Endothelial cell of umbilical vein (primary cell): ENCODE measurements at regions of chr10 and their contacts with region 1.

Region 1: GRCh38 chr10:35027567-35027966 is 62.6 kb downstream of the CUL2 start:
- DNase-seq: peak; percentile 63
- H3K4me3 ChIP-seq: no peak overlapping the region
- H3K27ac ChIP-seq: no peak overlapping the region
- H3K4me1 ChIP-seq: no peaks in the 10 kb centered on the region
- H3K27me3 ChIP-seq: no peaks in the 10 kb centered on the region
- CTCF ChIP-seq: peak in 1 of 2 donors; percentile 6
- POLR2A ChIP-seq: no peak

Region 2: DNA sequence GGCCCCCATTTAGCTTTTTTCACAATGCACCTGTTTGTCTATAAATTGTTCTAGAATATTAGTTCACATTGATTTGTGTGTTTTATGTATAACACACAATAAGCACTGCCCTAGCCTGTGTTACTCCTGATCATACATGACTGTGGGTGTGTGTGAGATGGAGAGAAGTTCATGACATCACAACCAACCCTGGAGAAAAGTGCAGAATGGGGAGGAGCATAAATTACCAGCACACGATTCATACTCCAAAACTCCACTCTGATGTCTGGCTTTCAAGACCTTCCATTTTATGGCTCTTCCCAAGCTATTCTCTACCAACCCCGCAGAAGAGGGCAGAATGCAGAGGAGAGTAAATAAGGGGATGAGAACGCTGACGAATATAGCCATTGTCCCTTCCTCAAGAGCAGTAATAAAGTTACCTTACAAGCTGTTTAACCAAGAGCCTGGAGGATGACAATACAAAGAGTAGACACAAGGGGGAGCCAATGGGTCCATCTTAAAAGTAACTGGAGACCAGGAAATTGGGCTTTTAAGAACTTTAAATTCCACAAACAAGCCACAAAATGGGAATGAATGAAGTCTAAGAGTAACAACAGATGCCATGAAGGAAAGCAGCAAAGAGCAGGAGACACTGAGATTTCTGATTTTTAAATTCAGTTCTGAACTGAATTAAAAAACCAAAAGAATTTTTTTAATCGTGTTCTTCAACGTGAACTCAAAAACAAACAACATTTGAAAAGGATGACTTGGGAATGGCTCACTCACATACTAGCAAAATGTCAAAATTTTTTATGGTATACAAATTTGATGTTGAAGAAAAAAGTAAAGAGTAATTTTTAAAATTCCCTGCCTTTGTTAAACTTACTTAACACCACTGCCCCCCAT is 372.0 kb before region 1 on chr10:
- CTCF ChIA-PET with region 1: interaction called, 16 read pairs
- POLR2A ChIA-PET with region 1: no interaction called
- dilution Hi-C with region 1: no loop called
- intact Hi-C with region 1: no loop called
- DNase-seq: peak; percentile 86
- H3K4me3 ChIP-seq: no peak overlapping the region
- H3K27ac ChIP-seq: no peak overlapping the region
- H3K4me1 ChIP-seq: no peaks in the 10 kb centered on the region
- H3K27me3 ChIP-seq: no peaks in the 10 kb centered on the region
- CTCF ChIP-seq: peak; percentile 53 to 64
- POLR2A ChIP-seq: no peak

Region 3: DNA sequence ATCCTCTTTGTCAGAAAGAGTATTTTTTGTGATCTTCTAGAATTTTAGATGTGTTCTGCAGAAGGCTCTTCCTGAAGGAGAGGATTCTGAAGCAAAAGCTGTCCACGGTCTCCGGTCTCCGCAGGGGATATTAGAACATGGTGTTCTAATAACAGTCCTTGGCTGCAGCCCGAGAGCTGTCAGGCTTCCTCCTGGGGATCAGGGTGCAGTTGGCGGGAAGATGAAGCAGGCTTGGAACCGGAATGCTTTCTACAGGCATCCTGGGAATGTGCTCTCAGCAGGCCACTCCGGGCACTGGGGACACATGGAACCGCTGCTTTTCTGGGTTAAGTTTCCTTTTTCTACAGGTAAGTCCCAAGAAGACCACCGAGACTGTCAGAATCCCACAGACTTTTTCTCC is 93.9 kb before region 1 on chr10:
- CTCF ChIA-PET with region 1: interaction called, 3 read pairs
- POLR2A ChIA-PET with region 1: interaction called, 16 read pairs
- dilution Hi-C with region 1: no loop called
- intact Hi-C with region 1: no loop called
- DNase-seq: no peak
- H3K4me3 ChIP-seq: no peak overlapping the region
- H3K27ac ChIP-seq: no peak overlapping the region
- H3K4me1 ChIP-seq: peaks cover 4% of the 10 kb centered on the region
- H3K27me3 ChIP-seq: no peaks in the 10 kb centered on the region
- CTCF ChIP-seq: no peak
- POLR2A ChIP-seq: no peak

Region 4: GRCh38 chr10:35040760-35041501 is 13.4 kb after region 1 on chr10:
- CTCF ChIA-PET with region 1: interaction called, 11 read pairs
- POLR2A ChIA-PET with region 1: no interaction called
- dilution Hi-C with region 1: no loop called
- intact Hi-C with region 1: no loop called
- DNase-seq: peak; percentile 74
- H3K4me3 ChIP-seq: no peak overlapping the region
- H3K27ac ChIP-seq: no peak overlapping the region
- H3K4me1 ChIP-seq: peaks cover 16% of the 10 kb centered on the region
- H3K27me3 ChIP-seq: no peaks in the 10 kb centered on the region
- CTCF ChIP-seq: no peak
- POLR2A ChIP-seq: no peak

Region 5: GRCh38 chr10:35058134-35058533 is 30.6 kb after region 1 on chr10:
- CTCF ChIA-PET with region 1: interaction called, 13 read pairs
- POLR2A ChIA-PET with region 1: no interaction called
- dilution Hi-C with region 1: no loop called
- intact Hi-C with region 1: no loop called
- DNase-seq: peak; percentile 85
- H3K4me3 ChIP-seq: peak overlapping the region in 1 of 3 experiments; percentile 16
- H3K27ac ChIP-seq: peak overlapping the region; percentile 97
- H3K4me1 ChIP-seq: peaks cover 43% of the 10 kb centered on the region
- H3K27me3 ChIP-seq: no peaks in the 10 kb centered on the region
- CTCF ChIP-seq: no peak
- POLR2A ChIP-seq: peak; percentile 47

Region 6: GRCh38 chr10:35276889-35277288 is 249.3 kb after region 1 on chr10:
- CTCF ChIA-PET with region 1: no interaction called
- POLR2A ChIA-PET with region 1: no interaction called
- dilution Hi-C with region 1: no loop called
- intact Hi-C with region 1: no loop called
- DNase-seq: no peak
- H3K4me3 ChIP-seq: no peak overlapping the region
- H3K27ac ChIP-seq: no peak overlapping the region
- H3K4me1 ChIP-seq: no peaks in the 10 kb centered on the region
- H3K27me3 ChIP-seq: no peaks in the 10 kb centered on the region
- CTCF ChIP-seq: no peak
- POLR2A ChIP-seq: no peak